Right ventricle myocardium inferior (tissue), 1 donor: ENCODE measurements at regions of chr14 and their contacts with region 1.

Region 1: DNA sequence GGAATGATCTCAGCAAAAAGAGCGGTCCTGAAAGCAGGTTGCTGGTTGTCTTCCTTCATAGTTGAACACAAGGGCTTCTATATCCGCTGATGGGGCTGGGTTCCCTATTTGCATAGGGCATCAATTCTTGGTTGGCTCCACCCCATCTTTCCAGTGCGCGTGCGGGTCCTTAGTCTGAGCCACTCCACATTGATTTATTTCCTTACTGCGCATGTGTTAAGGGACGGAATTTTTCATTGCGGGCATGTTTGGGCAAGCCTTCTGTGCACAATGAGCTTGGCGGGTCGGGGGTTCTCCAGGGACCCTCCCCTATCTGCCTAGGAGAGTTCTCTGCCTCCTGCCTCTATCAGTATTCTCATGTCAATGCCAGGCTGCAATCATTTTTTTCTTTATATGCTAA is 21.2 kb upstream of the DLGAP5 start:
- DNase-seq: no peak
- ATAC-seq: no peak

Region 2: DNA sequence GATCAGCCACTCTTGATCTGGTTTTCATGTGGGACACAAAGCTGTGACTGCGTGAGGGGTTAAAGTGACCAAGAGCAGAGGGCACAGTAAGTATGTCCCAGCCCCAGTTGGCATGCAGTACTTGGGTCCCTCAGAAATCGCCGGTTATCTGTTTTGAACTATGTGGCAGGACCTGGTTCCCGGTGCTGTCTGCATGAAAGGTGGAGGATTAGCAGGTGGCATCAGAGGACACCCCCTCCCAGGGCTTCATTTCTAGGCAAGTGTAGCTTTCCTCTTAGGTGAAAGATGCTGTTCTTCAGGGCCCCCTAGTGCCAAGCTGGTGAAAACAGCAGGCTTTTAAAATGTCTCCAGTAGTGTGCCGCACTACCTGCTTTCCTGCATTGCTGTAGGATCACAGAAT is 141.9 kb after region 1 on chr14:
- intact Hi-C with region 1: loop called (anchors 5 kb)
- DNase-seq: no peak
- ATAC-seq: peak; percentile 61

Region 3: DNA sequence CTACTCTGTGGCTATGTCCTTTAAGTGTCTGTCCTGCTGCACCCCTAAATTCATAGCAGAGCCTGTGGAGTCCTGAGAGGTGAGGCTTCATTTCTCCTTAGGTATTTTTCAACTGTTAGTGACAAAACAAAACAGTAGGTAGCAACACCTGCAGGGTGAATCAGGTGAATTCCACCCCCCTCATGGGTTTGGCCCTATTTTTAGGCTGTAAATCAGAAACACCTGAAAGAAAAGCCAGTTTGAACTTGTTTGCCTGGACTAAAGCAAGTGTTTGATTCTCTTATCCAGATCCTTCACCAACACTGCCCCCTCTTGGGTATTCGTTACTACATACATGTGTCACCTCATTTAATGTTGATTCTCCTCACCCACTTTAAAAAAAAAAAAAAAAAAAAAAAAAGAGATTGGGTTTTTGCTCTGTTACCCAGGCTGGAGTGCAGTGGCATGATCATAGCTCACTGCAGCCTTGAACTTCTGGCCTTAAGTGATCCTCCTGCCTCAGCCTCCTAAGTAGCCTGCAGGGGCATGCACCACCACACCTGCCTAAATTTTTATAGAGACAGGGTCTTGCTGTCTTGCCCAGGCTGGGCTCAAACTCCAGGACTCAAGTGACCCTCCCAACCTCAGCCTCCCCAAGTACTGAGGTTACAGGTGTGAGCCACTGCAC is 217.5 kb after region 1 on chr14:
- intact Hi-C with region 1: loop called (anchors 1 kb)
- DNase-seq: no peak
- ATAC-seq: peak; percentile 47

Region 4: GRCh38 chr14:56474419-56475022 is 1261.9 kb after region 1 on chr14:
- intact Hi-C with region 1: loop called (anchors 10 kb)
- DNase-seq: no peak
- ATAC-seq: no peak